ENCODE measurements at regions of chr5 and their contacts with region 1.

Region 1: GRCh38 chr5:173802670-173803165 is 85.4 kb upstream of the CPEB4 start:
- DNase-seq: peak; percentile 65
- H3K4me3 ChIP-seq: no peak overlapping the region
- H3K27ac ChIP-seq: no peak overlapping the region
- H3K4me1 ChIP-seq: peaks cover 10% of the 10 kb centered on the region
- H3K27me3 ChIP-seq: no peaks in the 10 kb centered on the region
- CTCF ChIP-seq: no peak

Region 2: GRCh38 chr5:173567574-173567973 is 235.1 kb before region 1 on chr5:
- CTCF ChIA-PET with region 1: no interaction called
- dilution Hi-C with region 1: no loop called
- in situ Hi-C with region 1: no loop called
- intact Hi-C with region 1: no loop called
- DNase-seq: peak; percentile 70
- H3K4me3 ChIP-seq: no peak overlapping the region
- H3K27ac ChIP-seq: peak overlapping the region; percentile 36
- H3K4me1 ChIP-seq: peaks cover 23% of the 10 kb centered on the region
- H3K27me3 ChIP-seq: no peaks in the 10 kb centered on the region
- CTCF ChIP-seq: no peak

Region 3: DNA sequence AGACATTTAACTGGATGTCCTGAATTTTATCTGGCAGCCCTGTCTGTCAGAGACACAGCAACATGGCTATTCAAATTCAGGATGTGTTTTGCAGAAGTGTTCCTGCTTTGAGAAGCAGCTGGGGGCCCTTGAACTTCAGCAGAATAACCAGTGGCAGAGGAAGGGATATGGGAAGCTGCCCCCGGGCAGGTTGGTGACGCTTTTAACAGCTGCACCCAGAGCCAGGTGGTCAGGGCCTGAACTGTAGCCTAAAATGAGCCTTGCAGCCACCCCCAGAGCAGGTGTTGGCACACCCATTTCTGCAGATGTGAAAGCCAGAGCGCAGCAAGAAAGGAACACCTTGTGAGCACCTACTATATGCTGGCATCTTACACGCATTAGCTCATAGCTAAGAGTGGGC is 57.6 kb before region 1 on chr5:
- CTCF ChIA-PET with region 1: no interaction called
- dilution Hi-C with region 1: no loop called
- in situ Hi-C with region 1: no loop called
- intact Hi-C with region 1: no loop called
- DNase-seq: no peak
- H3K4me3 ChIP-seq: no peak overlapping the region
- H3K27ac ChIP-seq: no peak overlapping the region
- H3K4me1 ChIP-seq: peaks cover 3% of the 10 kb centered on the region
- H3K27me3 ChIP-seq: no peaks in the 10 kb centered on the region
- CTCF ChIP-seq: no peak

Region 4: DNA sequence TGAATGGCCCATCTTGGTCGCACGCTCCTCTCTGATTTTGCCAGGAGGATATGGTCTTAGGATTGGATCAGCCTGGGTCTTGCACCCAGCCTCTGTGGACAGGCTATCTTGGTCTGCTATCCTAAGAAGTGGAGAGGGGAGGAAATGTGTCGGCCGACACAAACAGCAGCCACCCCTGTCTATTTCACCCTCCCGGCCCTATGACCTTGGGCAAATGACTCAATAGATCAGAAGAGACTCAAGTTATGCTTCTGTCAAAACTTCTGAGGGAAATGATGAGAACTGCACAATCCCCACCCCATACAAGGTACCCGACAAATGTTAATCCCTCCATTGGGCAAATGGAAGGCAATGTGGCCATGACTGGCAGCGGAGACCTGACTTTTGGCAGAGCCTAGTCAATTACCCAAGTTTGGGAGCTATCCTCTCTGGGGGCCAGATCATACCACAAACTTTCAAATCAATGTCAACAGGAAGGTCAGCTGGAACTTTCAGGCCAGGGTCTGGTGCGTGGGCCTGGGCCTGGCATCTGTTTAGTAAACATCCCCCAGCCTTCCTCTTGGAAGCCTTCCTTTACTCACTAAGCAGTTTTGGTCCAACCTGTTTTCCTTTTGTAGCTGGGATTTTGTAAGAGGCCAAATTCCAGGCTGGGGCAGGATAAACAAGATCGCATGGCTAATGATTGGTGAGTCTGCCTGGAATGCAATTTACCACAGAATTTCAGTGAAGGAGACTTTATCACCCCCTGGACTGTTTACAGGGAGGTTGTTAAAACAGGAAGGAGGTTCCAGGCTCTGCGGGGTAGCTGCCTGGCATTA is 21.2 kb after region 1 on chr5:
- CTCF ChIA-PET with region 1: no interaction called
- dilution Hi-C with region 1: no loop called
- in situ Hi-C with region 1: no loop called
- intact Hi-C with region 1: loop called (anchors 2 kb)
- DNase-seq: peak; percentile 83
- H3K4me3 ChIP-seq: no peak overlapping the region
- H3K27ac ChIP-seq: no peak overlapping the region
- H3K4me1 ChIP-seq: no peaks in the 10 kb centered on the region
- H3K27me3 ChIP-seq: no peaks in the 10 kb centered on the region
- CTCF ChIP-seq: no peak